ENCODE measurements at regions of chr4 and their contacts with region 1.

Region 1: DNA sequence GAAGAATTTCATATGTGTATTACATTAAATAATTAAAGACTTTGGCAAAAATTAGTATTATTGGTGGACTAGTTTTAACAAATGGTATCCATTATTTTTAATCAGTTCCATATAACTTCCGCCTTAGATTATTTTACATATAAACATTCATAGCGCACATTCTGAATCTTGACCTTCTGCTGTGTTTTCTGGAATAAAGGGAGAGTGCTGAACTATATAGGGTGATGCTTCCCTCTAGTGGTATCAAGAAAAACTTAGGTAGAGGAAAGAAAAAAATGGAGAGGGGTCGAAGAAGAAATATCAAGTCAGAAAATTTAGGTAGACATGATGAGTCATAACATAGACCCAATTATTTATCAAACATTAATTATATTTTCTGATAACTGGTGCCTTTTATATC is 155.6 kb upstream of the PACRGL start:
- DNase-seq: no peak
- H3K4me3 ChIP-seq: no peak overlapping the region
- CTCF ChIP-seq: peak; percentile 37

Region 2: GRCh38 chr4:20416800-20417199 is 127.8 kb before region 1 on chr4:
- CTCF ChIA-PET with region 1: interaction called, 25 read pairs
- POLR2A ChIA-PET with region 1: no interaction called
- DNase-seq: no peak
- H3K4me3 ChIP-seq: no peak overlapping the region
- CTCF ChIP-seq: no peak

Region 3: DNA sequence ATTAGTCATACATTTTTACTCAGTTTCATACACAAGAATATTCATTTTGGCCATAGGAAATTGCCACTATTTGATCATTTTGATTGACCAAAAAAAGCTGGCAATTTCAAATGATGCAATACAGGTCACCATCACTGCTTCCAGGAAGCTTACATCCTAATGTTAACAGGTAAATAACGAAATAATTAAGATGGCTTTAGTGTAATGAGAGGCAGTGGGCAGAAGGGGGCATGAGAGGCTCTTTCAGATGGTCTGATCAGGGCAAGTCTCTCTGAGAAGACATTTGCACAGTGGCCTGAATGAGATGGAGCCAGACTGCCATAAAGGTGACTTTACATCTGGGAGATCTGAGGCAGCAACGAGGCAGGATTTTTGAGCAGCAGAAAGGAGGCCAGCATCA is 122.2 kb before region 1 on chr4:
- CTCF ChIA-PET with region 1: interaction called, 25 read pairs
- POLR2A ChIA-PET with region 1: no interaction called
- DNase-seq: no peak
- H3K4me3 ChIP-seq: no peak overlapping the region
- CTCF ChIP-seq: peak; percentile 54

Region 4: GRCh38 chr4:20565075-20565721 is 20.6 kb after region 1 on chr4:
- CTCF ChIA-PET with region 1: interaction called, 12 read pairs
- POLR2A ChIA-PET with region 1: no interaction called
- DNase-seq: no peak
- H3K4me3 ChIP-seq: no peak overlapping the region
- CTCF ChIP-seq: no peak

Region 5: GRCh38 chr4:20652231-20652885 is 107.7 kb after region 1 on chr4:
- CTCF ChIA-PET with region 1: no interaction called
- POLR2A ChIA-PET with region 1: no interaction called
- DNase-seq: no peak
- H3K4me3 ChIP-seq: no peak overlapping the region
- CTCF ChIP-seq: no peak

Region 6: DNA sequence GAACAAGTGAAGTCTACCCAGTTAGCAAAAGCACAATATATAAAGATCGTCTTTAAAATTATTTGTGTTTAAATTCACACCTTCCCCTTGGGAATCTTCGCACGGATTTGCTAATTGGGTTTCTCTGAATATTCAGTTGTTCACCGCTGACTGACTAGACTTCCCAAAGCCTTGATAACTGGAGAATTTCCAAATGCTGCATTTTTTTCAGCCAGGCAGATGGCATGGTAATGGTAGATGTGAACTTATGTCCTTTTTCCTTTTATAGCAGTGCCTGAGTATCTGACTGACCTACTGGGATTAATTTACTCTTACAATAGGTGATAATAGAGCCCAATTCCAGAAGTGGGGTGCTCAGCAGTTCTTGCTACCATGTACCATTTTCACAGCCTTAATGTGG is 703.7 kb after region 1 on chr4:
- CTCF ChIA-PET with region 1: no interaction called
- POLR2A ChIA-PET with region 1: no interaction called
- DNase-seq: no peak
- H3K4me3 ChIP-seq: no peak overlapping the region
- CTCF ChIP-seq: no peak